Activated CD8-positive, alpha-beta T cell treated with anti-CD3 and anti-CD28 coated beads, Interleukin-2, amount 10 ng/mL, durations not matched to agents 7 days and 5 days (primary cell): ENCODE measurements at regions of chr19 and their contacts with region 1.

Region 1: DNA sequence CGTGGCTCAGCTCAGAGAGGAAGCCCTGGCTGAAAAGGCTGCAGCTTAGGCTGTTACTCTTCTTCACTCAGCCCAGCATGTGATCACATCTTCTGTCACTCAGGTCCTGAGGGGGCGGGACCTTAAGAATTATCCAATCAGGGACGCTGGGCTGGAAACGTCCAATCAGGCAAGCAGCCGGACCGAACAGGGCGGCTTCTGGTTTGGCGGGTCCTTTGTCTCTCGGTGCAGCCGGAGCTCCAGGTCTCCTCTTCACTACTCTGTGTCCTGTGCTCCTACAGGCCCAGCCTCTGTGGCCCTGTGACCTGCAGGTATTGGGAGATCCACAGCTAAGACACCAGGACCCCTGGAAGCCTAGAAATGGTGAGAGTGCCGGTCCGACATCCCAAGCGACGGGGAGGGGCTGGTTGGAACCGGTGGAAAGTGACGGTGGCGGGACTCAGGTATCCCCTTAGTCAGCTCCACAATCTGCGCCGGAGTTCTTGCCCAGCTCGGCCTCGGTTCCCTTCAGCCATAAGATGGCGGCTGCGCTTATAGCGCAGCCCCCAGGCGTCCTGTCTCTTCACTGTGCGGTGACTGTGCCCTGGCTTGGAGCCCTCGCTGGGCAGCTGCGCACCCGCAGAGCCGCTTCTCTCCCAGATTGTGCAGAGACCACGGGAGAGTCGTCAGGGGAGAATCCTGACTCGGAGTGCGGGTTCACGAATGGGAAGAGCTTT is at the start of gene ZNF93:
- DNase-seq: peak; percentile 96
- ATAC-seq: peak; percentile 96
- H3K4me3 Mint-ChIP-seq: peak within 1 kb of the TSS; percentile 97
- H3K27ac Mint-ChIP-seq: peak within 1 kb of the TSS; percentile 98
- H3K4me1 Mint-ChIP-seq: peaks cover 40% of the 10 kb centered on the region
- H3K27me3 Mint-ChIP-seq: no peaks in the 10 kb centered on the region
- total RNA-seq, gene ZNF93: 15.8 to 17.9 TPM

Region 2: DNA sequence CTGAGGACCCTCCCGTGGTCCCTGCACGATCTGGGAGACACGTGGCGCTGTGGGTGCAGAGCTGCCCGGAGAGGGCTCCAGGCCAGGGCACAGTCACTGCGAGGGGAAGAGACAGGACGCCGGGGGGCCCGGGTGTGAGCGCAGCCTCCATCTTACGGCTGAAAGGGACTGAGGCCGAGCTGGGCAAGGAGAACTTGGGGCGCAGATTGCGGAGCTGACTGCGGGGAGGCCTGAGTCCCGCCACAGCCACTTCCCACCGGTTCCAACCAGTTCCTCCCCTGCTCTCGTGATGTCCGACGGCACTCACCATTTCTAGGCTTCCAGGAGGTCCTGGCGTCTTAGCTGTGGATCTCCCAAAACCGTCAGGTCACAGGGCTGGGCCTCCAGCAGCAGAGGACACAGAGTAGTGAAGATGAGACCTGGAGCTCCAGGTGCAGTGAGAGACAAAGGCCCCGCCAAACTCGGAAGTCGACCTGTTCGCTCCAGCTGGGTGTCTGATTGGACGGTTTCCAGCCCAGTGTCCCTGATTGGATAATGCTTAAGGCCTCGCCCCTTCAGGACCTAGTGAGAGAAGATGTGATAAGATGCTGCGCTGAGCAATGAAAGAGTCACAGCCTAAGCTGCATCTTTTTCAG is 40.0 kb before region 1 on chr19:
- CTCF ChIA-PET with region 1: interaction called, 4 read pairs
- POLR2A ChIA-PET with region 1: interaction called, 85 read pairs
- DNase-seq: peak; percentile 64
- ATAC-seq: peak; percentile 21
- H3K4me3 Mint-ChIP-seq: peak overlapping the region; percentile 68
- H3K27ac Mint-ChIP-seq: peak overlapping the region; percentile 68
- H3K4me1 Mint-ChIP-seq: peaks cover 15% of the 10 kb centered on the region
- H3K27me3 Mint-ChIP-seq: no peaks in the 10 kb centered on the region

Region 3: GRCh38 chr19:19865739-19866481 is 35.0 kb before region 1 on chr19 and contains the start of gene ZNF253:
- CTCF ChIA-PET with region 1: interaction called, 4 read pairs
- POLR2A ChIA-PET with region 1: interaction called, 85 read pairs
- DNase-seq: peak; percentile 99
- ATAC-seq: peak; percentile 96
- H3K4me3 Mint-ChIP-seq: peak within 1 kb of the TSS; percentile 100
- H3K27ac Mint-ChIP-seq: peak within 1 kb of the TSS; percentile 100
- H3K4me1 Mint-ChIP-seq: peaks cover 32% of the 10 kb centered on the region
- H3K27me3 Mint-ChIP-seq: no peaks in the 10 kb centered on the region
- total RNA-seq, gene ZNF253: 15.7 to 17.5 TPM